IMR-90 (cell line): ENCODE measurements at regions of chr11 and their contacts with region 1.

Region 1: DNA sequence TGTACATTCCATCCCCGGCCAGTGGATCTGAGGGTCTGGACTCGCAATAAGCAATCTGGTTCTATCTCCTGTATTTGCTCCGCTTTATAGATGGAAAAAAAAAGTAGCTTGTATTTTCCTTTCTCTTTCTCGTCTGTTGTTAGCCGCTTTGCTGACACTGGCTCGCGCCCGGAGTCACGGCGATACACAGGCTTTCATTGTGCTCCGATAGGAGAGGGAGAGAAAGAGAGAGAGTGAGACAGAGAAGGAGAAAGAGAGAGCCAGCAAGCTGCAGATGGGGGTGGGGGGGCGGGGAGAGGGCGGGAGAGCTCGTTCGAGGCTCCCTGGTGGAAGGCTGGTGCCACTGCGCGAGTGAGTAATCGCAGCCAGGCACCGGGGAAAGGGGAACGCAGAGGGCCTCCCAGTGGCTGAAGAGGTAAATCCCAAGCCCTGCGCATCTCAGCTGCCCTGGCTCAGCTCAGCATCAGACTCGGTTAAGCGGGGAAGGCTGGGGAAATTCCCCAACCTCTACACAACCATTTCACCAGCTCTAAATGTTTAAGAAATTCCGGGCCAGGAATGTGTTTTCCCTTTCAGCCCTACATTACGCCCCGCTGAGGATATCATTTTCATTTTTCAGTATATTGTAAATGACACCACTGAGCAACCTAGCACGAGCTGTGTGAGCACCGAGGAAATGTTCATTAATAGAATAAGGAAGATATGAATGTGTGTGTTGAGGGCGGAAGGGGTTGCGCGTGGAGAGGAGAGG is at the start of gene MAML2:
- DNase-seq: peak; percentile 94
- ATAC-seq: peak; percentile 88
- H3K4me3 ChIP-seq: peak within 1 kb of the TSS; percentile 92
- H3K27ac ChIP-seq: peak within 1 kb of the TSS; percentile 94
- H3K4me1 ChIP-seq: peaks cover 9% of the 10 kb centered on the region
- H3K27me3 ChIP-seq: no peaks in the 10 kb centered on the region
- CTCF ChIP-seq: peak; percentile 99
- POLR2A ChIP-seq: peak; percentile 73
- RAD21 ChIP-seq: peak; percentile 95
- total RNA-seq, gene MAML2: 18.1 and 19.5 TPM in 2 replicates

Region 2: DNA sequence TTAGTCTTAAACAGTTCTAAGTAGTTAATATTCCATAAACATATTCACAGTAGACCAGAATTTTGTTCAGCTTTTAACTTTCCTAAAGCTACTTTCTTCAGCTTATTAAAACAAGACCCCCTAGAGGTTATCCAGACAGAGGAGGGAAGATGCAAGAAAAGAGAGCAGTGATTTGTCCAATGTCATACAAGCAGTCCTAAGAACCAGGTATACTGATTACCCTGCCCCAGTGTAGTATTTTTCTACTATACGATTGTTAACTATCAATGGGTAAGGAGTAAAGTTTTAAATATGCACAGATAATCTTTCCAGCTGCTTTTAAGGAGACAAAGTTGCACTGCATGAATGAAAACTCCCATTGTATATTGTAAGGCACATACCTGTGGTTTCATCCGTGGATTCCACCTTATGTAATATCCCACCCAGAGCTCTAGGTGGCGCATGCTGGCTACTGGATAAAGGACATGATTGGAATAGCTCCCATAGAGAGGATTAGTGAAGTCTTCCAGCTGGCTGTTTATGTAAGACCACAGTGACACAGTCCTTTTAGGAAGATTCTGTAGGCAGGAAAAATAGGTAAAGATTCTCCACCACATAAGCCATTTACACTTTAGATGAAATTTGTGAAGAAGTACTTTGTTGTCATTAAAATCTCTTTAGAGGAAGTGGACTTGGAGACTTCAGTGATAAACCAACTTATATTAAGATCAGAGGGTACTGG is 507.2 kb before region 1 on chr11:
- CTCF ChIA-PET with region 1: interaction called, 16 read pairs
- POLR2A ChIA-PET with region 1: no interaction called
- dilution Hi-C with region 1: no loop called
- in situ Hi-C with region 1: no loop called
- intact Hi-C with region 1: loop called (anchors 1 kb)
- DNase-seq: peak; percentile 96
- ATAC-seq: peak; percentile 84
- H3K4me3 ChIP-seq: no peak overlapping the region
- H3K27ac ChIP-seq: no peak overlapping the region
- H3K4me1 ChIP-seq: peaks cover 12% of the 10 kb centered on the region
- H3K27me3 ChIP-seq: no peaks in the 10 kb centered on the region
- CTCF ChIP-seq: peak; percentile 97
- POLR2A ChIP-seq: no peak
- RAD21 ChIP-seq: peak; percentile 95

Region 3: DNA sequence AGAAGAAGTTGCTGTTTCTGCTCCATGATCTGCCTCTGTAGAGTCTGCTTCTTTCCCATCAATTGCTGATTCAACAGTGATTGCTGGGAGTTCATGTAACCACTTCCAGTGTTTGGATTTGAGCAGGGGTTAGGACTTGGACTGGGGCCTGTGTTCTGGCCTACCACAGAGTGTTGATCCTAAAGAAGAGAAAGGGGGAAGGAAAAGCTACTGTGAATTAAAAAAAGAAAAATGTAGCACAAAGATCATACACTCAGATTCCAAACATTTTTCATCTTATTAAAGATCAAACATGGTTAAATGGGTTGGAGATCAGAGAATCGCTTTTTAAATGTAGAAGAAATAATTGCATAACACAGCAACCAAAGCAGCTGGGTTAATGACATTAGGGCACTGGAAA is 351.6 kb before region 1 on chr11:
- CTCF ChIA-PET with region 1: interaction called, 5 read pairs
- POLR2A ChIA-PET with region 1: no interaction called
- dilution Hi-C with region 1: no loop called
- in situ Hi-C with region 1: no loop called
- intact Hi-C with region 1: loop called (anchors 5 kb)
- DNase-seq: peak; percentile 80
- ATAC-seq: peak; percentile 85
- H3K4me3 ChIP-seq: no peak overlapping the region
- H3K27ac ChIP-seq: peak overlapping the region; percentile 51; the same call in 1 of the 2 replicates
- H3K4me1 ChIP-seq: peaks cover 13% of the 10 kb centered on the region
- H3K27me3 ChIP-seq: no peaks in the 10 kb centered on the region
- CTCF ChIP-seq: no peak
- POLR2A ChIP-seq: no peak
- RAD21 ChIP-seq: no peak

Region 4: DNA sequence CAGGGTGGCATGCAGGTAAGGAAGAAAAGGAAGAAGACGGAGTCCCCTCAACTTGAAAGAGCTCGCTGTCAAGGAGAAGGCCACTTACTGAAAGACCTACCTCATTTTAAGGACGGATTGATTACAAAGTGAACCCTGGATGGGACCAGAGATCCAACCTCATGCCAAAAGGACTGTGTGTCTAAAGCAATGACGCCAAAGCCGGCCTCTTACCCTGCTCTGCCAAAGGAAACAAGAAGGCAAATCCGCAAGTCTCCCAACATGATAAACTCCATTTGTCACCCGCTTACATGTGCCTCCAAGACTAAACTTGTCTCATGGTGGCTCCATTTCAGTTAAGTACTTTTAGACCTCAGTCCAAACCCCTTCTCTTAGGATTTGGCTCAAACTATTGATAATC is 270.5 kb before region 1 on chr11:
- CTCF ChIA-PET with region 1: interaction called, 10 read pairs
- POLR2A ChIA-PET with region 1: no interaction called
- dilution Hi-C with region 1: no loop called
- in situ Hi-C with region 1: no loop called
- intact Hi-C with region 1: no loop called
- DNase-seq: no peak
- ATAC-seq: no peak
- H3K4me3 ChIP-seq: no peak overlapping the region
- H3K27ac ChIP-seq: no peak overlapping the region
- H3K4me1 ChIP-seq: no peaks in the 10 kb centered on the region; the same call in 1 of the 2 replicates
- H3K27me3 ChIP-seq: no peaks in the 10 kb centered on the region
- CTCF ChIP-seq: no peak
- POLR2A ChIP-seq: no peak
- RAD21 ChIP-seq: no peak

Region 5: GRCh38 chr11:96162816-96163499 is 180.2 kb before region 1 on chr11:
- CTCF ChIA-PET with region 1: interaction called, 6 read pairs
- POLR2A ChIA-PET with region 1: no interaction called
- dilution Hi-C with region 1: no loop called
- in situ Hi-C with region 1: loop called (anchors 5 kb)
- intact Hi-C with region 1: no loop called
- DNase-seq: peak; percentile 95
- ATAC-seq: peak; percentile 77
- H3K4me3 ChIP-seq: no peak overlapping the region
- H3K27ac ChIP-seq: peak overlapping the region; percentile 92
- H3K4me1 ChIP-seq: peaks cover 27% of the 10 kb centered on the region
- H3K27me3 ChIP-seq: no peaks in the 10 kb centered on the region
- CTCF ChIP-seq: no peak
- POLR2A ChIP-seq: no peak
- RAD21 ChIP-seq: no peak

Region 6: GRCh38 chr11:96235751-96236150 is 107.4 kb before region 1 on chr11:
- CTCF ChIA-PET with region 1: interaction called, 34 read pairs
- POLR2A ChIA-PET with region 1: no interaction called
- dilution Hi-C with region 1: no loop called
- in situ Hi-C with region 1: no loop called
- intact Hi-C with region 1: no loop called
- DNase-seq: peak; percentile 73
- ATAC-seq: peak; percentile 74
- H3K4me3 ChIP-seq: no peak overlapping the region
- H3K27ac ChIP-seq: peak overlapping the region; percentile 84; the same call in 1 of the 2 replicates
- H3K4me1 ChIP-seq: peaks cover 19% of the 10 kb centered on the region
- H3K27me3 ChIP-seq: no peaks in the 10 kb centered on the region
- CTCF ChIP-seq: no peak
- POLR2A ChIP-seq: no peak
- RAD21 ChIP-seq: no peak

Region 7: GRCh38 chr11:96306933-96307775 is 36.0 kb before region 1 on chr11:
- CTCF ChIA-PET with region 1: interaction called, 27 read pairs
- POLR2A ChIA-PET with region 1: interaction called, 3 read pairs
- dilution Hi-C with region 1: no loop called
- in situ Hi-C with region 1: no loop called
- intact Hi-C with region 1: loop called (anchors 2 kb)
- DNase-seq: peak; percentile 99
- ATAC-seq: peak; percentile 66
- H3K4me3 ChIP-seq: peak overlapping the region; percentile 29
- H3K27ac ChIP-seq: peak overlapping the region; percentile 71
- H3K4me1 ChIP-seq: peaks cover 18% of the 10 kb centered on the region
- H3K27me3 ChIP-seq: no peaks in the 10 kb centered on the region
- CTCF ChIP-seq: no peak
- POLR2A ChIP-seq: peak; percentile 84
- RAD21 ChIP-seq: 0 out of 2 replicates have a peak, but pooled peaks have one; percentile 8